ENCODE measurements at regions of chr1 and their contacts with region 1.

Region 1: GRCh38 chr1:151915061-151915686 is 5.9 kb upstream of the THEM4 start:
- DNase-seq: no peak
- ATAC-seq: no peak
- H3K4me3 ChIP-seq: no peak overlapping the region
- H3K4me3 Mint-ChIP-seq: no peak overlapping the region
- H3K27ac ChIP-seq: no peak overlapping the region
- H3K27ac Mint-ChIP-seq: no peak overlapping the region
- H3K4me1 ChIP-seq: no peaks in the 10 kb centered on the region
- H3K4me1 Mint-ChIP-seq: peaks cover 8% of the 10 kb centered on the region
- H3K27me3 ChIP-seq: no peaks in the 10 kb centered on the region
- H3K27me3 Mint-ChIP-seq: no peaks in the 10 kb centered on the region
- CTCF ChIP-seq: no peak

Region 2: GRCh38 chr1:151881456-151881855 is 33.7 kb before region 1 on chr1:
- CTCF ChIA-PET with region 1: no interaction called
- POLR2A ChIA-PET with region 1: no interaction called
- intact Hi-C with region 1: loop called in 1 of 2 experiments (anchors 5 kb)
- DNase-seq: no peak
- ATAC-seq: no peak
- H3K4me3 ChIP-seq: no peak overlapping the region
- H3K4me3 Mint-ChIP-seq: no peak overlapping the region
- H3K27ac ChIP-seq: no peak overlapping the region
- H3K27ac Mint-ChIP-seq: no peak overlapping the region
- H3K4me1 ChIP-seq: no peaks in the 10 kb centered on the region
- H3K4me1 Mint-ChIP-seq: peaks cover 7% of the 10 kb centered on the region
- H3K27me3 ChIP-seq: no peaks in the 10 kb centered on the region
- H3K27me3 Mint-ChIP-seq: no peaks in the 10 kb centered on the region
- CTCF ChIP-seq: no peak

Region 3: DNA sequence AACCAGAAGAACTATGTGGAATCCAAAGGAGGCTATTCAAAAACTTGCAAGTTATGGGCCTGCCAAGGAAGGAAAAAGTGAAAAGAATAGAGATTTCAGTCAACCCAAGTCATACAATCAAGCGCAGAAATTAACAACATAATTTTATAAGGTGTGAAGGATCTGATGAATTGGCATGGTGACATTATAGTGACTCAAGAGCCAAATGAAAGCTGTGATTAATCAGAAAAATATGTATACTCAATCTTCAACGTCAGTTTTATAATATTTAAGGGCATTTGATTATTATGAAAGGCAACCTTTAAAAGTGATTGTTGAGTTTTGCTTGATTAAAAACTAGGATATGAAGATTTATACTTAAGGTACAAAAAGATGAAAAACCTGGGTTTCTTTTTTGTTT is 32.0 kb after region 1 on chr1:
- CTCF ChIA-PET with region 1: no interaction called
- POLR2A ChIA-PET with region 1: no interaction called
- intact Hi-C with region 1: loop called in 1 of 2 experiments (anchors 1 kb)
- DNase-seq: no peak
- ATAC-seq: no peak
- H3K4me3 ChIP-seq: no peak overlapping the region
- H3K4me3 Mint-ChIP-seq: no peak overlapping the region
- H3K27ac ChIP-seq: peak overlapping the region in 1 of 2 donors; percentile 85
- H3K27ac Mint-ChIP-seq: peak overlapping the region; percentile 88
- H3K4me1 ChIP-seq: peaks cover 40% of the 10 kb centered on the region
- H3K4me1 Mint-ChIP-seq: peaks cover 37% of the 10 kb centered on the region
- H3K27me3 ChIP-seq: no peaks in the 10 kb centered on the region
- H3K27me3 Mint-ChIP-seq: no peaks in the 10 kb centered on the region
- CTCF ChIP-seq: no peak

Measured in CD4-positive, alpha-beta T cell (primary cell).